ENCODE measurements at regions of chr17 and their contacts with region 1.

Region 1: GRCh38 chr17:75131280-75132017 is at the start of gene NT5C:
- DNase-seq: peak; percentile 97
- H3K4me3 ChIP-seq: peak within 1 kb of the TSS; percentile 64 to 88
- H3K27ac ChIP-seq: peak within 1 kb of the TSS; percentile 78 to 90
- H3K4me1 ChIP-seq: peaks cover 5 to 16% of the 10 kb centered on the region in 2 experiments; a peak in 2 of 4 replicates
- H3K27me3 ChIP-seq: no peaks in the 10 kb centered on the region
- CTCF ChIP-seq: peak; percentile 74
- EP300 ChIP-seq: no peak
- RAD21 ChIP-seq: 0 out of 2 replicates have a peak, but pooled peaks have one; percentile 16
- polyA plus RNA-seq, gene NT5C: 111 and 114 TPM in 2 replicates

Region 2: DNA sequence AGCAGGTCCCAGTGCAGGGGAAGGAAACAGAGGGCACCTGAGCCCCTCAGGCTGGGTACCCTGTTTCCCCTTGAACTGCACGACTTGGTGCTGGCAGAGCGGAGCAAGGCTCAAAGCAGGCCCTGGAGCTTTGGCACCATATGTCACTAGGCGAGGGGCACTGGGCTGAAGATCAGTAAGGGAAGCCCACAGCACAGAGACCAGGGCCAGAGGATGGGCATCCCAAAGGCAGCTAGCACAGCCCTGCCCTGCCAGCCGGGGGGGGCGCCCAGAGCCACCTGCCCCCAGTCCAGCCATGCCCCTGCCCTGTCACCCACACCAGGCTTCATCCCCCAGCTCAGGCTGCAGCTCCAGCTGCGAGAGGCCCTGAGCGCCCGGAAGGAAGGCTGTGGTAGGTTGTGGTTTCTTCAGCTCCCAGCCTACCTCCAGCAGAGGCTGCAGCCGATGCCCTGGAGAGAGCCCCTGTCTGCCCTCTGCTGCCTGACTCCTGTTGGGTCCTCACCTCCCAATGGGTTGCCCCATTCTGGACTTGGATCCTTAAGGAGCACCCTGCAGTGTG is 372.1 kb before region 1 on chr17:
- CTCF ChIA-PET with region 1: no interaction called
- POLR2A ChIA-PET with region 1: no interaction called
- DNase-seq: peak; percentile 38
- H3K4me3 ChIP-seq: no peak overlapping the region
- H3K27ac ChIP-seq: peak overlapping the region in 1 of 2 experiments; percentile 94; a peak in 2 of 4 replicates
- H3K4me1 ChIP-seq: peaks cover 45 to 68% of the 10 kb centered on the region in 2 experiments; a peak in 3 of 4 replicates
- H3K27me3 ChIP-seq: no peaks in the 10 kb centered on the region
- CTCF ChIP-seq: no peak
- EP300 ChIP-seq: no peak
- RAD21 ChIP-seq: no peak

Region 3: GRCh38 chr17:75034236-75034908 is 97.1 kb before region 1 on chr17:
- CTCF ChIA-PET with region 1: interaction called, 11 read pairs
- POLR2A ChIA-PET with region 1: no interaction called
- DNase-seq: peak; percentile 81
- H3K4me3 ChIP-seq: peak overlapping the region; percentile 67 to 98
- H3K27ac ChIP-seq: peak overlapping the region; percentile 90 to 92
- H3K4me1 ChIP-seq: peaks cover 0 to 22% of the 10 kb centered on the region in 2 experiments; a peak in 1 of 4 replicates
- H3K27me3 ChIP-seq: no peaks in the 10 kb centered on the region
- CTCF ChIP-seq: peak; percentile 49
- EP300 ChIP-seq: peak in 1 of 2 experiments; percentile 12; a peak in 1 of 4 replicates
- RAD21 ChIP-seq: no peak

Region 4: GRCh38 chr17:75059369-75060345 is 71.8 kb before region 1 on chr17:
- CTCF ChIA-PET with region 1: interaction called, 10 read pairs
- POLR2A ChIA-PET with region 1: no interaction called
- DNase-seq: peak; percentile 47
- H3K4me3 ChIP-seq: no peak overlapping the region
- H3K27ac ChIP-seq: no peak overlapping the region
- H3K4me1 ChIP-seq: no peaks in the 10 kb centered on the region
- H3K27me3 ChIP-seq: no peaks in the 10 kb centered on the region
- CTCF ChIP-seq: peak; percentile 57
- EP300 ChIP-seq: no peak
- RAD21 ChIP-seq: peak; percentile 55

Region 5: DNA sequence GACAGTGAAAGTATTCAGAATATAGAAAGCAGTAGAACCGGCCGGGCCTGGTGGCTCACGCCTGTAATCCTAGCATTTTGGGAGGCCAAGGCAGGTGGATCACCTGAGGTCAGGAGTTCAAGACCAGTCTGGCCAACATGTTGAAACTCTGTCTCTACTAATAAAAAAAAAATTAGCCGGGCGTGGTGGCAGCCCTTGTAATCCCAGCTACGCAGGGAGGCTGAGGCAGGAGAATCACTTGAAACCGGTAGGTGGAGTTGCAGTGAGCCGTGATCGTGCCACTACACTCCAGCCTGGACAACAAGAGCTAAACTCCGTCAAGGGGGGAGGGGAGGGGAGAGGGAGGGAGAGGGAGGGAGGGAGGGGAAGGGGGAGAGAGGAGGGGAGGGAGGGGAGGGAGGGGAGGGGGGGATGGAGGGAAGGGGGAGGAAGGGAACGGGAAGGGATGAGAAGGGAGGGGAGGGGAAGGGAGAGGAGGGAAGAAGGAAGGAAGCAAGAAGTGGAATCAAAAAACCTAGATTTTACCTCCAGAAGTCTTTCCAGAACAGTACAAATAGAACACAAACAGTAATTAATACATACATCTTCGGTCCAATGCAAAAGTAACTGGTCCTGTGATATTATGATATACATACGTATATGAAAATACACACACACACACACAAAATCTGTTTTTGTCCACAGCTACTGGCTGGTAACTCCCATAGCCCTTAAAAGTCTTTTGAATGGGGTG is 11.0 kb after region 1 on chr17:
- CTCF ChIA-PET with region 1: interaction called, 25 read pairs
- POLR2A ChIA-PET with region 1: interaction called, 3 read pairs
- DNase-seq: no peak
- H3K4me3 ChIP-seq: no peak overlapping the region
- H3K27ac ChIP-seq: no peak overlapping the region
- H3K4me1 ChIP-seq: no peaks in the 10 kb centered on the region
- H3K27me3 ChIP-seq: no peaks in the 10 kb centered on the region
- CTCF ChIP-seq: no peak
- EP300 ChIP-seq: no peak
- RAD21 ChIP-seq: no peak

Region 6: DNA sequence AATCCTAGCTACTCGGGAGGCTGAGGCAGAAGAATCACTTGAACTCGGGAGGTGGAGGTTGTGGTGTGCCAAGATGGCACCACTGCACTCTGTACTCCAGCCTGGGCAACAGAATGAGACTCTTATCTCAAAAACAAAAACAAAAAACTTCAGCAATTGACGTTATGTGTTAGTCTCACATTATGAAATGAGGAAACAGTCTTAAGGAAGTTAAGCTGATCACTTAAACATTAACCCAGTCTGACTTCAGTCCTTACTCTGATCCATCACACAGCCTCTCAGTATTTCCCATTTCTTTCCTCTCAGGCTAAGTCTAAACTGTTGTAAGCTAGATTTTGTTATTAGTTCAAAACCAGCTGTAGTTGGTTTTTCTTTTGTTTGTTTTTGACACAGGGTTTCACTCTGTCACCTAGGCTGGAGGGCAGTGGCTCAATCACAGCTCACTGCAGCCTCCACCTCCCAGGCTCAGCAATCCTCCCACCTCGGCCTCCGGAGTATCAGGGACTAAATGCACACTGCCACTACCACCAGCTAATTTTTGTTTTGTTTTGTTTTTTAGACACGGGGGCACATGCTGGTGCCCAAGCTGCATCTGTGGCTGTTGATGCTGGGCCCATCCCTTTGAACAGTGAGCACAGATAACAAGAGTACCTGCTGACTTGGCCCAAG is 16.6 kb after region 1 on chr17:
- CTCF ChIA-PET with region 1: interaction called, 25 read pairs
- POLR2A ChIA-PET with region 1: interaction called, 8 read pairs
- DNase-seq: no peak
- H3K4me3 ChIP-seq: no peak overlapping the region
- H3K27ac ChIP-seq: no peak overlapping the region
- H3K4me1 ChIP-seq: no peaks in the 10 kb centered on the region; a peak in 2 of 4 replicates
- H3K27me3 ChIP-seq: no peaks in the 10 kb centered on the region
- CTCF ChIP-seq: no peak
- EP300 ChIP-seq: no peak
- RAD21 ChIP-seq: no peak

Region 7: GRCh38 chr17:75173526-75173925 is 42.1 kb after region 1 on chr17:
- CTCF ChIA-PET with region 1: interaction called, 21 read pairs
- POLR2A ChIA-PET with region 1: no interaction called
- DNase-seq: no peak
- H3K4me3 ChIP-seq: no peak overlapping the region
- H3K27ac ChIP-seq: no peak overlapping the region
- H3K4me1 ChIP-seq: no peaks in the 10 kb centered on the region
- H3K27me3 ChIP-seq: no peaks in the 10 kb centered on the region
- CTCF ChIP-seq: no peak
- EP300 ChIP-seq: no peak
- RAD21 ChIP-seq: no peak

Region 8: GRCh38 chr17:75182569-75183450 is 51.4 kb after region 1 on chr17 and contains the start of gene SUMO2:
- CTCF ChIA-PET with region 1: interaction called, 11 read pairs
- POLR2A ChIA-PET with region 1: no interaction called
- DNase-seq: peak; percentile 100
- H3K4me3 ChIP-seq: peak within 1 kb of the TSS; percentile 67 to 93
- H3K27ac ChIP-seq: peak within 1 kb of the TSS; percentile 90 to 99
- H3K4me1 ChIP-seq: peaks cover 3 to 6% of the 10 kb centered on the region in 2 experiments; a peak in 2 of 4 replicates
- H3K27me3 ChIP-seq: no peaks in the 10 kb centered on the region
- CTCF ChIP-seq: no peak
- EP300 ChIP-seq: 0 out of 4 replicates have a peak, but pooled peaks of 1 of the 2 experiments have one; percentile 17
- RAD21 ChIP-seq: no peak
- polyA plus RNA-seq, gene SUMO2: 85.5 and 114 TPM in 2 replicates